Caco-2 (cell line): ENCODE measurements at regions of chr10 and their contacts with region 1.

Region 1: DNA sequence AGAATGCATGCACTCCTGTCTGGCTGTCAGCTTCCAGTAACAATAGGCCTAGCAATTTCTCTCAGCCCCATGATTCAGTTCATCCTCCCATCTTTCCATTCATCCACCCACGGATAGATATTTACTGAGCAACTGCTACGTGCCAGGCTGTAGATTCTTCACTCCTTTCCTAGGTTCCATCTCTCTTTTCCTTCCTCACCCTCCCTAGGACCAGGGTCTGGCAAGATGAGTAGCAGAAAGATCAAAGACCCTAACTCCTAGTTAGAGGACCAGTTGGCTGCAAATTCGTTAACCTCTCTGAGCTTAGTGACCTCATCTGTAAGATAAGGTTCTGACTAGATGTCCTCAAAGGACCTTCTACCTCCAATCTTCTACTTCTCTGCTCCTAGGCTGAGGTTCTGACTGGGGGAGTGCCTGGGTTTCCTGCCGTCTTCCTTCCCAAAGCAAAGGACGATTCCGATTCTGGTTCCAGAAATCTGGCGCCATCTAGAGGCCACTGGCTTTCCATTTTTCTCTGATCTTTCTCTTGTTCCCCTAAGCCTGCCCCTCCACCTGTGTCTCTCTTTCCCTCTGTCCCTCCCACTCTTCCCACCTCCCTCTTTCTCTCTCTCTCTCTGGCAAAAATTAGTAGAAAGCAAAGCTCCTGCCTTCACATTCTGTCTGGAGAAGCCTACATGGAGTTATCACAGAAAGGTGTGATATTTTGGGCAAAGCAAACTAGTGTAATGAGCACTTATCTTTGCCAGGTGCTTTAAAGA is 26.2 kb downstream of the TBATA start:
- DNase-seq: peak; percentile 79 to 85
- H3K4me3 ChIP-seq: no peak overlapping the region
- H3K4me3 Mint-ChIP-seq: no peak overlapping the region
- H3K27ac Mint-ChIP-seq: no peak overlapping the region
- H3K4me1 ChIP-seq: 0 out of 2 replicates have a peak, but pooled peaks cover 5% of the 10 kb centered on the region
- H3K4me1 Mint-ChIP-seq: peaks cover 13% of the 10 kb centered on the region
- H3K27me3 ChIP-seq: no peaks in the 10 kb centered on the region
- H3K27me3 Mint-ChIP-seq: no peaks in the 10 kb centered on the region
- CTCF ChIP-seq: peak; percentile 94 to 96

Region 2: GRCh38 chr10:70430493-70431445 is 328.2 kb before region 1 on chr10:
- CTCF ChIA-PET with region 1: interaction called, 3 read pairs
- POLR2A ChIA-PET with region 1: no interaction called
- intact Hi-C with region 1: loop called (anchors 10 kb)
- DNase-seq: peak; percentile 76 to 86
- H3K4me3 ChIP-seq: no peak overlapping the region
- H3K4me3 Mint-ChIP-seq: no peak overlapping the region
- H3K27ac Mint-ChIP-seq: no peak overlapping the region
- H3K4me1 ChIP-seq: peaks cover 28% of the 10 kb centered on the region
- H3K4me1 Mint-ChIP-seq: peaks cover 4% of the 10 kb centered on the region
- H3K27me3 ChIP-seq: no peaks in the 10 kb centered on the region
- H3K27me3 Mint-ChIP-seq: no peaks in the 10 kb centered on the region
- CTCF ChIP-seq: peak in 1 of 2 experiments; percentile 66

Region 3: GRCh38 chr10:70549962-70550458 is 208.9 kb before region 1 on chr10:
- CTCF ChIA-PET with region 1: interaction called, 8 read pairs
- POLR2A ChIA-PET with region 1: interaction called, 7 read pairs
- intact Hi-C with region 1: loop called (anchors 1 kb)
- DNase-seq: peak; percentile 78 to 88
- H3K4me3 ChIP-seq: no peak overlapping the region
- H3K4me3 Mint-ChIP-seq: no peak overlapping the region
- H3K27ac Mint-ChIP-seq: no peak overlapping the region
- H3K4me1 ChIP-seq: peaks cover 5% of the 10 kb centered on the region; the same call in 1 of the 2 replicates
- H3K4me1 Mint-ChIP-seq: peaks cover 16% of the 10 kb centered on the region
- H3K27me3 ChIP-seq: no peaks in the 10 kb centered on the region
- H3K27me3 Mint-ChIP-seq: no peaks in the 10 kb centered on the region
- CTCF ChIP-seq: peak; percentile 99 to 100

Region 4: GRCh38 chr10:70619271-70620019 is 139.5 kb before region 1 on chr10:
- CTCF ChIA-PET with region 1: no interaction called
- POLR2A ChIA-PET with region 1: no interaction called
- intact Hi-C with region 1: loop called (anchors 1 kb)
- DNase-seq: no peak
- H3K4me3 ChIP-seq: no peak overlapping the region
- H3K4me3 Mint-ChIP-seq: no peak overlapping the region
- H3K27ac Mint-ChIP-seq: no peak overlapping the region
- H3K4me1 ChIP-seq: no peaks in the 10 kb centered on the region
- H3K4me1 Mint-ChIP-seq: no peaks in the 10 kb centered on the region
- H3K27me3 ChIP-seq: no peaks in the 10 kb centered on the region
- H3K27me3 Mint-ChIP-seq: peaks cover 16% of the 10 kb centered on the region
- CTCF ChIP-seq: peak in 1 of 2 experiments; percentile 39

Region 5: GRCh38 chr10:70747192-70747965 is 11.6 kb before region 1 on chr10:
- CTCF ChIA-PET with region 1: no interaction called
- POLR2A ChIA-PET with region 1: no interaction called
- intact Hi-C with region 1: no loop called
- DNase-seq: no peak
- H3K4me3 ChIP-seq: no peak overlapping the region
- H3K4me3 Mint-ChIP-seq: no peak overlapping the region
- H3K27ac Mint-ChIP-seq: no peak overlapping the region
- H3K4me1 ChIP-seq: peaks cover 6% of the 10 kb centered on the region; the same call in 1 of the 2 replicates
- H3K4me1 Mint-ChIP-seq: no peaks in the 10 kb centered on the region
- H3K27me3 ChIP-seq: no peaks in the 10 kb centered on the region
- H3K27me3 Mint-ChIP-seq: no peaks in the 10 kb centered on the region
- CTCF ChIP-seq: no peak

Region 6: GRCh38 chr10:70880077-70880534 is 121.2 kb after region 1 on chr10:
- CTCF ChIA-PET with region 1: interaction called, 3 read pairs
- POLR2A ChIA-PET with region 1: no interaction called
- intact Hi-C with region 1: loop called (anchors 1 kb)
- DNase-seq: peak; percentile 87 to 91
- H3K4me3 ChIP-seq: no peak overlapping the region
- H3K4me3 Mint-ChIP-seq: no peak overlapping the region
- H3K27ac Mint-ChIP-seq: no peak overlapping the region
- H3K4me1 ChIP-seq: no peaks in the 10 kb centered on the region
- H3K4me1 Mint-ChIP-seq: no peaks in the 10 kb centered on the region
- H3K27me3 ChIP-seq: no peaks in the 10 kb centered on the region
- H3K27me3 Mint-ChIP-seq: no peaks in the 10 kb centered on the region
- CTCF ChIP-seq: peak; percentile 98

Region 7: GRCh38 chr10:70903262-70903921 is 144.5 kb after region 1 on chr10:
- CTCF ChIA-PET with region 1: no interaction called
- POLR2A ChIA-PET with region 1: no interaction called
- intact Hi-C with region 1: no loop called
- DNase-seq: peak; percentile 71 to 79
- H3K4me3 ChIP-seq: no peak overlapping the region
- H3K4me3 Mint-ChIP-seq: no peak overlapping the region
- H3K27ac Mint-ChIP-seq: no peak overlapping the region
- H3K4me1 ChIP-seq: peaks cover 8% of the 10 kb centered on the region
- H3K4me1 Mint-ChIP-seq: no peaks in the 10 kb centered on the region
- H3K27me3 ChIP-seq: no peaks in the 10 kb centered on the region; the same call in 1 of the 2 replicates
- H3K27me3 Mint-ChIP-seq: peaks cover 3% of the 10 kb centered on the region
- CTCF ChIP-seq: peak; percentile 97 to 98

Region 8: DNA sequence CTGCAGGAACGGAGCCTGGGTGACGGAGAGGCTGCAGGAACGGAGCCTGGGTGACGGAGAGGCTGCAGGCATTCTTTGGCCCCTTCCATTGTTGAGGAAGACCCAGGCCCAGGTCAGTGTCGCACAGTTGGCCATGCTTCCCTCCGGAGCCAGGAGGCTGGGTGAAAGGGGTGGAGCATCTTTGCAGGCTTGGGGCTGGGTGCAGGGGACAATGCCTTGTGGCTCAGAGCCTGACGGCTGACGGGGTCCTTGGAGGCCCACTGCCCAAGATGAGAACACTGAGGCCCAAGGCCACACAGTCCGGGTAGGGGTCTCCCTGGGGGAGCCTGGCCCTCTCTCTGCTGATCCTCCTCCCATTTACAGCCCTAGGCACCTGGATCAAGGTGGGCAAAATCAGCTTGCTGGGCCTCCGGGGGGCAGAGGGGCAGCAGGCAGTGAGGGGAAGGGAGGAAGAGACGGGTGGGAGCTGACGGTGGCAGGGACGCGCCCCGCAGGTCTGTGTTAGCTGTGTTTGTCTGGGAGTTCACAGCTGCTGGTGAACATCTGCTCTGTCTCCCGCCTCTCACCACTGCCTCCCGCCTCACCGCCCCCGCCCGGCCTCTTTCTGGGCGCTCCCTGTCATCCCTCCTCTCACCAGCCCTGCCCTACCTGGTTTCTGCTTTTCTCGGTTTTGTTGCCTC is 160.1 kb after region 1 on chr10:
- CTCF ChIA-PET with region 1: no interaction called
- POLR2A ChIA-PET with region 1: no interaction called
- intact Hi-C with region 1: no loop called
- DNase-seq: no peak
- H3K4me3 ChIP-seq: no peak overlapping the region
- H3K4me3 Mint-ChIP-seq: no peak overlapping the region
- H3K27ac Mint-ChIP-seq: no peak overlapping the region
- H3K4me1 ChIP-seq: no peaks in the 10 kb centered on the region
- H3K4me1 Mint-ChIP-seq: no peaks in the 10 kb centered on the region
- H3K27me3 ChIP-seq: peaks cover 4% of the 10 kb centered on the region; the same call in 1 of the 2 replicates
- H3K27me3 Mint-ChIP-seq: peaks cover 23% of the 10 kb centered on the region
- CTCF ChIP-seq: no peak

Region 9: DNA sequence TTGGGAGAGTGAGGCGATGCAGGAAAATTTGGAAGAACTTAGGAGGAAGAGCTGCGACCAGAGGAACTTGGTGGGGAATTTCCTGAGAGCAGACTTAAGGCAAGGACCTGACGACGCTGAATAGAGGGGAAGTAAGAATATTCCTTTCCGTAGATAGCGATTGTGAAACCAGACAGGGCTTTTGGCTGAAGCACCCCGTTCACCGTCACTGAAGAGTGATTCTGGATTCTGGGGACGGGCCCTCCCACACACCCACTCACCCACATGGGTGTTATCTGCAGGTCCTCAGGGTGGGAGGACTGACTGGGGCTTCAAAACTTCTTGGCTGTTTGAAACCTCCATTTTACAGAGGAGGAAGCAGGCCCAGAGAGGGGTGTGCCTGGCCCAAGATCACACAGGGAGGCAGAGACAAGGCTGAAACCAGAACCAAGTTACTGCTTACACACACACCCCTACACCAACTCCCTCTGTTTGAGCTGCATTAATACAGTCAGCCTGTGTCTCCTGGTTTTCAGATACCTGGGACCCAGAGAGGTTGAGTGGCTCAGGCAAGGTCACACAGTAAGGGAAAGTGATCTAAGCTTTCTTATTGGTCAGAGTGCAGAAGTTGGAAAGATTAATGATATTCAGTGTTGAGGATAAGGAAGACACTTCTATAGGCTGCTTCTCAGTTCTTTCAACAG is 600.6 kb after region 1 on chr10:
- CTCF ChIA-PET with region 1: no interaction called
- POLR2A ChIA-PET with region 1: no interaction called
- intact Hi-C with region 1: no loop called
- DNase-seq: no peak
- H3K4me3 ChIP-seq: no peak overlapping the region
- H3K4me3 Mint-ChIP-seq: no peak overlapping the region
- H3K27ac Mint-ChIP-seq: no peak overlapping the region
- H3K4me1 ChIP-seq: no peaks in the 10 kb centered on the region
- H3K4me1 Mint-ChIP-seq: no peaks in the 10 kb centered on the region
- H3K27me3 ChIP-seq: no peaks in the 10 kb centered on the region
- H3K27me3 Mint-ChIP-seq: no peaks in the 10 kb centered on the region
- CTCF ChIP-seq: no peak